ENCODE measurements at regions of chr16 and their contacts with region 1.

Region 1: DNA sequence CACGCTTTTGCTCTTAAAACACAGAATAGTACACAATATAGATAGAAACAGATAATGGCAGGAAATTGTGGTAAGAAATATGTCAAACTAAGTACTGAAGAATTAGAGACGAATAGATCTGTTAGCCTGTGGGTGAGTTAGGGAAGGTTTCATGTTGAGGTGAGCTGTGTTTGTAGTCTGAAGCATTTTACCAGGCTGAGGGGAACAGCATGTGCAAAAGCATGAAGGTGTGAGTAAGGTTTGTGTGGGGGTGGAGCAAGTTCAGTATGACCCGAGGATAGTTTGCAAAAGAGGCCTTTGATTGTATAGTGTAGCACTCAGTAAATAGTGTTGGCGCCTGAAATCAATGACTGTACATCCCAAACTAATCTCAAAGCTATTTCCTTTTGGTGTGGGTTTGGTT is 13.8 kb downstream of the IGSF6 start:
- DNase-seq: peak; percentile 51
- H3K4me3 Mint-ChIP-seq: no peak overlapping the region
- H3K27ac Mint-ChIP-seq: peak overlapping the region; percentile 18
- H3K4me1 Mint-ChIP-seq: peaks cover 8% of the 10 kb centered on the region
- H3K27me3 Mint-ChIP-seq: no peaks in the 10 kb centered on the region
- CTCF ChIP-seq: no peak

Region 2: DNA sequence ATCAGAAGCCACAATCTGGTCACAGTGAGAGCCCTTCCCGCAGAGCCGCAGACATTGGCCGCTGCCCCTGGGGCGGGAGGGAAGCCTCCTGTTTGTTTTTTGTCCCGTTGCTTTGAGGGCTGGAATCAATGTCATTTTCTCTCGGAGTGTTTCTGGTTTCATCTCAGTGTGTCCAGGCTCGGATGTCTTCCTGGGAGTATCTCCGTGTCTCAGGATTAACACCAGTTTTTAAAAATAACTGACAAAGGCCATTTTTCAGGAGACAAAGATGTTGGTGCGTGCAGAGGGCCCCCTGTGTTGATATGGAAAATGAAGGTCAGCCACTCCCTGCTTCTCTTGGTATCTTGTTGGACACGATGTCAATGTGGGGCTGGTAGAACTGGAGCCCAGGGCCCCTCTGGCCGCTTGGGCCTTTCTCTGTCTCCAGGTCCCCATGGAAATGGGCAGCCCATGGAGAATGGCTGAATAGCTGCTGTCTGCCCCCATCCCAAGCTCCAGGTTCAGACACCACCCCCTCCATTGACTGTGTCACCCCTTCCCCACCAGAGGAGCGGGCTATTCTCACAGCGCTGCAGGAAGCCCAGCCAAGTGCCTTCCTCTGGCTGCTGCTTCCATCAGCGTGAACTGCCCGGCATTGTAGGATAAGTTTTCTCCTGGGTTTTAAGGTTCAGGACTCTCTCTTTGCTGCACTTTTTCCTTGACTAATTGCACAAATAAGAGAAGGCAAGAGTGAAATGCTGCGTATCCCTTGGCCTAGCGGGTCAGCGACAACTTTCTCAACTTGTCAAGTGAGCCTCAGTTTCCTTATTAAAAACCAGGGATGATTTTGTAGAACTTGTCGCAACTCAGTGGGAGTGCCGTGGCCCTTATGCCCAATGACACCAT is 111.4 kb before region 1 on chr16:
- CTCF ChIA-PET with region 1: no interaction called
- POLR2A ChIA-PET with region 1: no interaction called
- intact Hi-C with region 1: no loop called
- DNase-seq: no peak
- H3K4me3 Mint-ChIP-seq: no peak overlapping the region
- H3K27ac Mint-ChIP-seq: no peak overlapping the region
- H3K4me1 Mint-ChIP-seq: no peaks in the 10 kb centered on the region
- H3K27me3 Mint-ChIP-seq: peaks cover 12% of the 10 kb centered on the region
- CTCF ChIP-seq: no peak

Region 3: GRCh38 chr16:21584817-21585216 is 53.8 kb before region 1 on chr16:
- CTCF ChIA-PET with region 1: interaction called, 72 read pairs
- POLR2A ChIA-PET with region 1: interaction called, 4 read pairs
- intact Hi-C with region 1: loop called (anchors 1 kb)
- DNase-seq: no peak
- H3K4me3 Mint-ChIP-seq: no peak overlapping the region
- H3K27ac Mint-ChIP-seq: no peak overlapping the region
- H3K4me1 Mint-ChIP-seq: no peaks in the 10 kb centered on the region
- H3K27me3 Mint-ChIP-seq: no peaks in the 10 kb centered on the region
- CTCF ChIP-seq: no peak

Region 4: DNA sequence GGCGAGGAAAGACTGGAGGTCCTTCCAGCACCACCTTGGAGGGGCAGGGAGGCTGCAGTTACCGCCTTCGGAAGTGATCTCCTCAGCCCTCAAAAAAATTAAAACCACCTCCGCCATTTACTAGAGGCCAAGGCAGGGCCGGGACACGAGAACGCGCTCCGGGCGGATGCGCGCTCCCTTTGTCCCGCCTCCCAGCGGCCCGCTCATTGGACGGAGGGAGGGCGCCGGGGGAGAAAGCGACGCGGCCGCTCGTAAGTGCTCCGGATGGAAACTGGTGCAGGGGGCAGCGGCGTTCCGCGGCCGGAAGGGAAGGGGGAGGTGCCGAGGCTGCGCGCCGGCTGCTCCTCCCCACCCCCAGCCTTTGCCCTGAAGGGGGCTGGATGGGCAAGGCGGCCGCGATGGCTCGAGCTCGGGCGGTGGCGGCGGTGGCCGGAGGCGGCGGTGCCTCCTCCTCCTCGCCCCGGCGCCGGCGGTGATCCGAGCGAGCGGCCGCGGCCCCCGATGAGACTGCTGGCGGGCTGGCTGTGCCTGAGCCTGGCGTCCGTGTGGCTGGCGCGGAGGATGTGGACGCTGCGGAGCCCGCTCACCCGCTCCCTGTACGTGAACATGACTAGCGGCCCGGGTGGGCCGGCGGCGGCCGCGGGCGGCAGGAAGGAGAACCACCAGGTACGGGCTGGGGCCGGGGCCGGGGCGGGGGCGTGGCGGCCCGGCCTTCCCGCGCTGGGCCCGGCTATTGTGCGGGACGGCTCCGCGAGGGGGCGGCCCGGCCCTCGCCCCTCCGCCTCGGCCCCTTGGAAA is 39.1 kb before region 1 on chr16 and contains the start of gene METTL9:
- CTCF ChIA-PET with region 1: interaction called, 15 read pairs
- POLR2A ChIA-PET with region 1: interaction called, 8 read pairs
- intact Hi-C with region 1: loop called (anchors 1 kb)
- DNase-seq: peak; percentile 95
- H3K4me3 Mint-ChIP-seq: peak within 1 kb of the TSS; percentile 83
- H3K27ac Mint-ChIP-seq: peak within 1 kb of the TSS; percentile 92
- H3K4me1 Mint-ChIP-seq: peaks cover 21% of the 10 kb centered on the region
- H3K27me3 Mint-ChIP-seq: no peaks in the 10 kb centered on the region
- CTCF ChIP-seq: no peak
- total RNA-seq, gene METTL9: 63.9 and 67.6 TPM in 2 replicates

Region 5: DNA sequence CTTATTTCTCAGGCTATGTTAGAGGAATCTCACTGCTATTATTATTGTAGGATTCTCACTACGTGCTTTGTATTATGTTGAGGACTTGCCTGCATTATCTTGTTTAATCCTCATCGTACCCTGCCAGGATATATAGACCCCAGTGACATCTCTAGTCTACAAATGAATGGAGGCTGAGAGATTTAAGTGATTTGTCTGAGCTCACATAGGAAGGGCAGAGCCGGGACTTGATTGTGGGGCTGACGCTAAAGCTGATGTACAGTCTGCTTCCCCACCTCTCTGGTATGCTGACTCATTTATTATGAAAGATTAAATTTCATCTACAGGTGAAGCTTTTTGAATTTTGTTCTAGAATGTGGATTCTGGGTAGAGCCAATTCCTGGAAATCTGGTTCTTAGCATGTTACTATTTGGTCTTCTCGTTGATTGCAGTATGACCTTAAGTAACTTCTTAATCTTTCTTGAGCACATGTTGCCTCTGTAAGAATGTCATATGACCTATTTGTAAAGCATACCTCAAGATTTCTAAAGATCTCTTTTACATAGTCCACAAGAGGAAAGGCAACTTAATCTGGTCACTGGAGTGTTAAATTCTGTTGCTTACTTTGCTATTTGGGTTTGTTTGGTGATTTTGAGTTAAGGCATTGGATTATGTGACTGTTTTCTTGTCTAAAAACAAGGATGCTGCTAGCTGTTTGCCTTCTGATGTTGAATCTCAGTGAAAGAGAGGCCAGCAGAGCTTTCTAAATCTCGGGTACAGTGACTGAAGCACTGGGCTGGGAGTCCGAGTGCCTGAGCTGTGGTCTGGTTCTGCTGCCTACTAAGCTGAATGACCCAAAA is 26.8 kb before region 1 on chr16:
- CTCF ChIA-PET with region 1: interaction called, 6 read pairs
- POLR2A ChIA-PET with region 1: interaction called, 12 read pairs
- intact Hi-C with region 1: no loop called
- DNase-seq: peak; percentile 47
- H3K4me3 Mint-ChIP-seq: peak overlapping the region; percentile 22
- H3K27ac Mint-ChIP-seq: peak overlapping the region; percentile 78
- H3K4me1 Mint-ChIP-seq: peaks cover 21% of the 10 kb centered on the region
- H3K27me3 Mint-ChIP-seq: no peaks in the 10 kb centered on the region
- CTCF ChIP-seq: no peak

Measured in MCF 10A (cell line).